ENCODE measurements at regions of chr3 and their contacts with region 1.

Region 1: DNA sequence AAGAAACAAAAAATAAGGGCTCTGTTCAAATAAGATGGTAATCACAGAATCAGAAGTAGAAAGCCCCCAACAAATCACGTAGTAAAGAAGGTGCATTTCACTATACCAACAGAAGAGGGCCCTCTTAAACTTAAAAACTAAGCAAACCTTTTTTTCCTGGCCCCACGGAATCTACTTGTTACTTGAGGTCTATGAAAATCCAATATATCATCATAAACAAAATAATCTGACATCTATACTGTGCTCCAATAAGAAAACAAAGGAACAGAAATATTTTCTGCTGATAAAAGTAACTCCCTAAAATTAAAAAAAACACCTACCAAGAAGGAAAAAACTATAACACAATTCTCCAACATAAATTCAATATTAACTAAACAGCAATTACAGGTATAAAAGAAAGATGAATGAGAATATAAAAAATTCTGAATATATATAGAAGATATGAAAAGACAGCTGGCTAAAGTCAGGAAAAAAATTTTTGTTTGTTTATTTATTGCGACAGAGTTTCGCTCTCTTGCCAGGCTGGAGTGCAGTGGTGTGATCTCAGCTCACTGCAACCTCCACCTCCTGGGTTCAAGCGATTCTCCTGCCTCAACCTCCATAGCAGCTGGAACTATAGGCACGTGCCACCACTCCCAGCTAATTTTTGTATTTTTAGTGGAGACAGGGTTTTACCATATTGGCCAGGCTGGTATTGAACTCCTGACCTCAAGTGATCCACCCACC is 81.8 kb downstream of the CLASP2 start:
- DNase-seq: no peak
- H3K4me3 ChIP-seq: peak overlapping the region in 8 of 59 donors; percentile 1 to 20 (median 7)
- H3K27ac ChIP-seq: peak overlapping the region in 41 of 59 donors; percentile 7 to 76 (median 50)
- H3K27me3 ChIP-seq: no peaks in the 10 kb centered on the region
- CTCF ChIP-seq: peak; percentile 59 to 90 (median 74)

Region 2: GRCh38 chr3:33768578-33769330 is 132.5 kb after region 1 on chr3:
- intact Hi-C with region 1: no loop called
- DNase-seq: no peak
- H3K4me3 ChIP-seq: no peak overlapping the region
- H3K27ac ChIP-seq: no peak overlapping the region
- H3K27me3 ChIP-seq: no peaks in the 10 kb centered on the region
- CTCF ChIP-seq: no peak

Region 3: GRCh38 chr3:33787328-33788009 is 151.2 kb after region 1 on chr3:
- intact Hi-C with region 1: loop called (anchors 5 to 10 kb)
- DNase-seq: peak in 8 of 10 donors; percentile 43 to 68 (median 56)
- H3K4me3 ChIP-seq: peak overlapping the region; percentile 18 to 72 (median 52)
- H3K27ac ChIP-seq: no peak overlapping the region
- H3K27me3 ChIP-seq: no peaks in the 10 kb centered on the region
- CTCF ChIP-seq: peak; percentile 35 to 89 (median 74)

Measured in dorsolateral prefrontal cortex (tissue), 120 donors.